Colonic mucosa (tissue), 4 donors: ENCODE measurements at regions of chr1 and their contacts with region 1.

Region 1: DNA sequence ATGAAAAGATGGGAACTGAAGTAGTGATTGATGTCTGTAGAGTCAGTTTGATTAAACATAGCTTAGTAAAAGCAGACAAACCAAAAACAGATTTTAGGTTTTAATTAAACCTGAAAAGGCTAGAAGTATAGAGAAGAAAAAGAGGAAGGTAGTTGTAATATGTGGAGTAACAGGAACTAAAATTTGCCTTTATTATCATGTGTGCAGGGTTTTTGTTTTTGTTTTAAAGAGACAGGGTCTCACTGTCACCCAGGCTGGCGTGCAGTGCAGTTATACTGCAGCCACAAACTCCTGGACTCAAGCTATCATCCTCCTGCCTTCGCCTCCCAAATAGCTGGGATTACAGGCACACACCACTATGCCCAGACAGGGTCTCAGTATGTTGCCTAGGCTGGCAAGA is 6.0 kb downstream of the TOR1AIP1 start:
- DNase-seq: no peak
- H3K4me3 ChIP-seq: no peak overlapping the region
- H3K27ac ChIP-seq: no peak overlapping the region
- H3K4me1 ChIP-seq: no peaks in the 10 kb centered on the region
- H3K27me3 ChIP-seq: no peaks in the 10 kb centered on the region
- CTCF ChIP-seq: no peak

Region 2: GRCh38 chr1:179529482-179530195 is 358.4 kb before region 1 on chr1:
- intact Hi-C with region 1: no loop called
- DNase-seq: no peak
- H3K4me3 ChIP-seq: no peak overlapping the region
- H3K27ac ChIP-seq: no peak overlapping the region
- H3K4me1 ChIP-seq: no peaks in the 10 kb centered on the region
- H3K27me3 ChIP-seq: no peaks in the 10 kb centered on the region
- CTCF ChIP-seq: no peak

Region 3: GRCh38 chr1:179754042-179754624 is 133.9 kb before region 1 on chr1:
- intact Hi-C with region 1: no loop called
- DNase-seq: no peak
- H3K4me3 ChIP-seq: no peak overlapping the region
- H3K27ac ChIP-seq: no peak overlapping the region
- H3K4me1 ChIP-seq: no peaks in the 10 kb centered on the region
- H3K27me3 ChIP-seq: no peaks in the 10 kb centered on the region
- CTCF ChIP-seq: no peak

Region 4: DNA sequence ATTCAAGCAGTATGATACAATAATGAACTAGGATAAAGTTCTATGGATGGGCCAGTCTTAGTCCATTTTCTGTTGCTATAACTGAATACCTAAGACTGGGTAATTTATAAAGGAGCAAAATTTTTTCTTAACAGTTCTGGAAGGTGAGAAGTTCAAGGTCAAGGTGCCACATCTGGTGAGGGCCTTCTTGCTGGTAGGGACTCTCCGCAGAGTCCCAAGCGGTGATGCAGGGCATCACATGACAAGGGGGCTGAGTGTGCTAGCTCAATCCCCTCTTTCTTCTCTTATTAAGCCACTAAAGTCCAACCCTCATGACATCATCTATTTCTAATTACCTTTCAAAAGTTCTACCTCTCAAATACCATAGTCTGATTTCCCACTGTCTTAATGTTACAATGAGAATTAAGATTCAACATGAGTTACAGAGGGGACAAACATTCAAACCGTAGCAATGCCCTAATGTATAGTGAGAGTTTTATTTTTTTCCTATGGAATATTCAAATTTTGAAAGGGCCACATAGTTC is 174.4 kb after region 1 on chr1:
- intact Hi-C with region 1: loop called (anchors 10 kb)
- DNase-seq: no peak
- H3K4me3 ChIP-seq: no peak overlapping the region
- H3K27ac ChIP-seq: no peak overlapping the region
- H3K4me1 ChIP-seq: no peaks in the 10 kb centered on the region
- H3K27me3 ChIP-seq: no peaks in the 10 kb centered on the region
- CTCF ChIP-seq: no peak